Sigmoid colon (tissue), 7 donors: ENCODE measurements at regions of chr7 and their contacts with region 1.

Region 1: GRCh38 chr7:21427182-21427870 is 557 bp upstream of the SP4 start:
- DNase-seq: peak; percentile 99
- H3K4me3 ChIP-seq: peak overlapping the region; percentile 55 to 91 (median 74)
- H3K27ac ChIP-seq: peak overlapping the region; percentile 91 to 99 (median 98)
- H3K4me1 ChIP-seq: peaks cover 0 to 44% (median 28%) of the 10 kb centered on the region in 4 donors
- H3K27me3 ChIP-seq: no peaks in the 10 kb centered on the region
- CTCF ChIP-seq: no peak
- EP300 ChIP-seq: peak in 2 of 4 donors; percentile 4 to 32
- POLR2A ChIP-seq: peak; percentile 27 to 59

Region 2: GRCh38 chr7:20786779-20787659 is 640.3 kb before region 1 on chr7 and contains the start of gene SP8:
- intact Hi-C with region 1: no loop called
- DNase-seq: no peak
- H3K4me3 ChIP-seq: peak within 1 kb of the TSS in 2 of 4 donors; percentile 19 to 25
- H3K27ac ChIP-seq: no peak within 1 kb of the TSS
- H3K4me1 ChIP-seq: peaks cover 0 to 41% (median 38%) of the 10 kb centered on the region in 4 donors
- H3K27me3 ChIP-seq: peaks cover 74 to 100% (median 99%) of the 10 kb centered on the region in 3 donors
- CTCF ChIP-seq: no peak
- EP300 ChIP-seq: no peak
- POLR2A ChIP-seq: no peak
- total RNA-seq, gene SP8: not detected

Region 3: DNA sequence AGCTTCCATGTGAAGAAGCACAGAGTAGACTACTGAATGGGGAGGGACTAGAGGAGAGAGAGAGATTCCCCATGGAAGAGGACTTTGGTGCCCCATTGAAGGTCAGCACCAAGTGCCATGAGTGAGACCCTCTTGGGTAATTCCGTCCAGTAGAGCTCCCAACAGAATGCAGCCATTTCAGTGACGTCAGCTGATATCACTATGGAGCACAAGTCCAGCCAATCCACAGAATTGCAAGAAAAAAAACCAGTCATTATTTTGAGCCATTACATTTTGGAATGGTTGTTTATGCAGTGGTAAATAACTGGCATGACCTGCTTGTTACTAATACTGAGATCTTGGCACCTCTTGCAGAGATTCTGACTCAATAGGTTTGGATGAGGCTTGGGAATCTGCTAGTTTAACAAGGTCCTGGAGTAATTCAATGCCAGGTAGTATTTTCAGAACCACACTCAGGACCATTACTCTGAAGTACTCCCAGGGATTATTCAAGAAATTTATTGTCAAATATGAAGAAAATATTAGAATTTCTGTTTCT is 588.1 kb before region 1 on chr7:
- intact Hi-C with region 1: no loop called
- DNase-seq: no peak
- H3K4me3 ChIP-seq: no peak overlapping the region
- H3K27ac ChIP-seq: no peak overlapping the region
- H3K4me1 ChIP-seq: no peaks in the 10 kb centered on the region
- H3K27me3 ChIP-seq: no peaks in the 10 kb centered on the region
- CTCF ChIP-seq: no peak
- EP300 ChIP-seq: no peak
- POLR2A ChIP-seq: no peak

Region 4: GRCh38 chr7:21984042-21984441 is 556.7 kb after region 1 on chr7:
- intact Hi-C with region 1: no loop called
- DNase-seq: no peak
- H3K4me3 ChIP-seq: no peak overlapping the region
- H3K27ac ChIP-seq: no peak overlapping the region
- H3K4me1 ChIP-seq: no peaks in the 10 kb centered on the region
- H3K27me3 ChIP-seq: no peaks in the 10 kb centered on the region
- CTCF ChIP-seq: no peak
- EP300 ChIP-seq: no peak
- POLR2A ChIP-seq: no peak

Region 5: GRCh38 chr7:22082886-22083703 is 655.8 kb after region 1 on chr7:
- intact Hi-C with region 1: loop called (anchors 5 kb)
- DNase-seq: peak; percentile 94
- H3K4me3 ChIP-seq: peak overlapping the region; percentile 52 to 73 (median 60)
- H3K27ac ChIP-seq: peak overlapping the region; percentile 79 to 88 (median 84)
- H3K4me1 ChIP-seq: peaks cover 0 to 14% (median 6%) of the 10 kb centered on the region in 4 donors
- H3K27me3 ChIP-seq: peaks cover 0 to 13% (median 0%) of the 10 kb centered on the region in 3 donors
- CTCF ChIP-seq: peak; percentile 81 to 96 (median 90)
- EP300 ChIP-seq: peak in 1 of 4 donors; percentile 35
- POLR2A ChIP-seq: no peak

Region 6: GRCh38 chr7:23013715-23014649 is 1586.7 kb after region 1 on chr7 and contains the start of gene HYCC1:
- intact Hi-C with region 1: loop called (anchors 10 kb)
- DNase-seq: peak; percentile 100
- H3K4me3 ChIP-seq: peak within 1 kb of the TSS; percentile 84 to 88 (median 86)
- H3K27ac ChIP-seq: peak within 1 kb of the TSS; percentile 82 to 90 (median 84)
- H3K4me1 ChIP-seq: peaks cover 0 to 25% (median 17%) of the 10 kb centered on the region in 4 donors
- H3K27me3 ChIP-seq: no peaks in the 10 kb centered on the region
- CTCF ChIP-seq: peak; percentile 47 to 68 (median 62)
- EP300 ChIP-seq: no peak
- POLR2A ChIP-seq: peak; percentile 88 to 92
- total RNA-seq, gene HYCC1: 28.8 to 49.9 (median 35.0) TPM

Region 7: GRCh38 chr7:23105644-23106056 is 1678.3 kb after region 1 on chr7 and contains the start of gene KLHL7:
- intact Hi-C with region 1: loop called (anchors 10 kb)
- DNase-seq: peak; percentile 98
- H3K4me3 ChIP-seq: peak within 1 kb of the TSS; percentile 64 to 97 (median 90)
- H3K27ac ChIP-seq: peak within 1 kb of the TSS; percentile 87 to 99 (median 96)
- H3K4me1 ChIP-seq: peaks cover 0 to 37% (median 28%) of the 10 kb centered on the region in 4 donors
- H3K27me3 ChIP-seq: no peaks in the 10 kb centered on the region
- CTCF ChIP-seq: no peak
- EP300 ChIP-seq: no peak
- POLR2A ChIP-seq: peak; percentile 84 to 93
- total RNA-seq, gene KLHL7: 26.9 to 42.5 (median 28.4) TPM